ENCODE measurements at regions of chr1 and their contacts with region 1.

Region 1: GRCh38 chr1:85884372-85885035 is 176.3 kb upstream of the ZNHIT6 start:
- DNase-seq: no peak

Region 2: GRCh38 chr1:85707990-85708828 is 176.3 kb before region 1 on chr1 and contains the start of gene ZNHIT6:
- intact Hi-C with region 1: loop called (anchors 10 kb)
- DNase-seq: peak; percentile 91
- total RNA-seq, gene ZNHIT6: 13.3 TPM

Measured in cardiac septum (tissue), 1 donor.